ENCODE measurements at regions of chr5 and their contacts with region 1.

Region 1: DNA sequence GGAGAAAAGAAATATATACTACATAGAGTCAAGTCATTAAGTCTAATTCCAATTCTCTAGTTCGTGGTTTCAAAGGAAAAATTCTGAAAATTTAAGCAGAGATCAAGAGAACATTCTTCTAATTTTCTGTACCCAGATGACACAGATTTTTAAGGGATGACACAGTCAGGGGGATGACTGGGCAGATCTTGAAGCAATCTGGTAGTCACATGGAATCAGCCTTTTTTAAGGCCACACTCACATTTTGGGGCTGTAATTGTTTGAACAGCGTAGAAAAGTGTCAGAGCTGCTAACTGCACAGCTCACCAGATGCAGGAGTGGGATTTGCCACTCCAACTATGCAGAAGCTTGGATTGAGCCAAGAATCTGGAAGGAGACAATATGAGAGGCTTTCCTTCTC is 20.4 kb downstream of the PDE4D start:
- DNase-seq: no peak
- ATAC-seq: no peak
- H3K4me3 ChIP-seq: no peak overlapping the region
- H3K27ac ChIP-seq: no peak overlapping the region
- H3K4me1 ChIP-seq: no peaks in the 10 kb centered on the region
- H3K27me3 ChIP-seq: no peaks in the 10 kb centered on the region; a peak in 1 of 5 replicates
- CTCF ChIP-seq: no peak
- EP300 ChIP-seq: no peak
- POLR2A ChIP-seq: no peak
- RAD21 ChIP-seq: no peak

Region 2: GRCh38 chr5:60257596-60258271 is 384.6 kb after region 1 on chr5:
- CTCF ChIA-PET with region 1: no interaction called
- POLR2A ChIA-PET with region 1: no interaction called
- in situ Hi-C with region 1: no loop called
- intact Hi-C with region 1: loop called (anchors 5 kb)
- DNase-seq: peak; percentile 74
- ATAC-seq: peak; percentile 98
- H3K4me3 ChIP-seq: no peak overlapping the region
- H3K27ac ChIP-seq: no peak overlapping the region
- H3K4me1 ChIP-seq: peaks cover 13% of the 10 kb centered on the region
- H3K27me3 ChIP-seq: no peaks in the 10 kb centered on the region
- CTCF ChIP-seq: no peak
- EP300 ChIP-seq: no peak
- POLR2A ChIP-seq: no peak
- RAD21 ChIP-seq: no peak